Heart left ventricle (tissue), 16 donors: ENCODE measurements at regions of chr6 and their contacts with region 1.

Region 1: DNA sequence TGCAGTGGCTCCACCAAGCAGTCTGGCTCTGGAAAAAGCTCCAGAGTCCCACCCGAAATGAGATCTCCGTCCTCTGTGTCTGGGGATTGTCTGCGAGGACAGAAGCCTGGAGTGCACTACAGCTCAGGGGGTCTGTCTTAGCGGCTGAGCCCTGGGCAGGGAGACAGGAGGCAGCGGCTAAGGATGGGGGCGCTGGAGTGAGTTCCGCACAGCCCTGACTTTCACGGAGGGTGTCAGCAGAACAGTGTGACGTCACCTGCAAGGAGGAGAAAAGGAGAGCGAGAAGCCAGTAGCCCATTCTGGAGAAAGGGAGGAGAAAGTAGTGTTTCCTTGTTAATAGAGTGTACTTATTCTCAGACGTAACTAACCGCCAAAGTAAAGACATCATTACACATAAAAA is 97.6 kb downstream of the FAM50B start:
- DNase-seq: no peak
- ATAC-seq: peak in 2 of 4 donors; percentile 29 to 51
- H3K4me3 ChIP-seq: peak overlapping the region in 2 of 12 donors; percentile 4 to 30
- H3K27ac ChIP-seq: peak overlapping the region in 2 of 12 donors; percentile 19 to 24
- H3K4me1 ChIP-seq: peaks cover 0 to 7% (median 0%) of the 10 kb centered on the region in 12 donors
- H3K27me3 ChIP-seq: no peaks in the 10 kb centered on the region
- CTCF ChIP-seq: no peak
- POLR2A ChIP-seq: no peak

Region 2: DNA sequence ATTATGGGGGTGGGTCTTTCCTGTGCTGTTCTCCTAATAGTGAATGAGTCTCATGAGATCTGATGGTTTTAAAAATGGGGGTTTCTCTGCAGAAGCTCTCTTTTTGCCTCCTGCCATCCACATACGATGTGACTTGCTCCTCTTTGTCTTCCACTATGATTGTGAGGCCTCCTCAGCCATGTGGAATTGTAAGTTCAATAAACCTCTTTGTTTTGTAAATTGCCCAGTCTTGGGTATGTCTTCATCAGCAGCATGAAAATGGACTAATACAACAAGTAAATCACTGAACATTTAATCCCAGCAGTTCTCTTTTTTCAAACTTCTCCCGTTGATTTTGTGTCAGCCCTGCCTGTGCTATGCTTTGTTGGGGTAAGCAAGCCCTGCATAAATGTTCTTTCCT is 37.0 kb after region 1 on chr6:
- intact Hi-C with region 1: loop called in 1 of 10 experiments (anchors 5 kb)
- DNase-seq: no peak
- ATAC-seq: no peak
- H3K4me3 ChIP-seq: no peak overlapping the region
- H3K27ac ChIP-seq: no peak overlapping the region
- H3K4me1 ChIP-seq: peaks cover 0 to 9% (median 0%) of the 10 kb centered on the region in 12 donors
- H3K27me3 ChIP-seq: no peaks in the 10 kb centered on the region
- CTCF ChIP-seq: no peak
- POLR2A ChIP-seq: no peak

Region 3: GRCh38 chr6:4055420-4056041 is 108.8 kb after region 1 on chr6:
- intact Hi-C with region 1: no loop called
- DNase-seq: peak in 2 of 5 donors; percentile 35 to 38
- ATAC-seq: peak; percentile 80 to 91 (median 87)
- H3K4me3 ChIP-seq: no peak overlapping the region
- H3K27ac ChIP-seq: peak overlapping the region in 7 of 12 donors; percentile 0 to 35 (median 11)
- H3K4me1 ChIP-seq: peaks cover 0 to 13% (median 6%) of the 10 kb centered on the region in 12 donors
- H3K27me3 ChIP-seq: no peaks in the 10 kb centered on the region
- CTCF ChIP-seq: peak in 11 of 12 donors; percentile 23 to 70 (median 52)
- POLR2A ChIP-seq: no peak